ENCODE measurements at regions of chr3 and their contacts with region 1.

Region 1: DNA sequence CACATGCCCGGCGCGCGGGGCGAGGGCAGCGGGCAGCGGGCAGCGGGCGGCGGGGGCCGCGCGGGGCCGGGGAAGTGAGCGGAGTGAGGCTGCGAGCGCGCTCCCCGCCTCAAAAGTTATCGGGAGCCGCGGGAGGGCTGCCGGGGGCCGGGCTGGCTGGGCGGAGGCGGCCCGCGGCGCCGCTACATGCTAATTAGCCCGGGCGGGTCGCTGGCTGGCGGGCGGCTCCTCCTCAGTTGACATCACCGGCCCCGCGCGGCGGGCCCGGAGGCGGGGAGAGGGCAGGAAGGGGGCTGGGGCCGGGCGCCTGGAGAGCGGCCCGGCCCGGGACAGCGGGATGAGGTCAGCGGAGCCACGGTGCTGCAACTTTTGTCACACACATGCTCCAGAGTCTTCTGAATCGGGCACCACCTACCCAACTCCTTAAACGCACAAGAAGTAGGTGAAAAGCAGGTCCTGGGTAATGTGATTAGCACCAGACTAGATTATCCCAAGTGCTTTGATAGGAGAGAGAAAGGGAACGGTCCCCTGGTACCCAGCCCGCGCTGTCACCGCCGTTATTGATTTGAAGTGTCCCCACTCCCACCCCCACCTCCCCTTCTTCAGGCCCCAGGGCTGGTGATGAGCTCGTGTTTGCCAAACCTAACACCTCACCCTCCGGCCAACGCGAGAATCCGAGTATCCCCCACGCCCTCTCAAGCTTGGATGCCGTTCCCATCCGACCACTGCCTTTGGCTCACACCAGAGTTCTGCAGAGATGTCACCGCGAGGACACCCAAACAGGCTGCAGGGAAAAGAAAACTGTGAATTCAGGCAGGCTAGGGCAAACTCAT is at the start of gene HEG1:
- DNase-seq: peak; percentile 75
- H3K4me3 Mint-ChIP-seq: peak within 1 kb of the TSS; percentile 95
- H3K27ac Mint-ChIP-seq: peak within 1 kb of the TSS; percentile 89
- H3K4me1 Mint-ChIP-seq: peaks cover 47% of the 10 kb centered on the region
- H3K27me3 Mint-ChIP-seq: peaks cover 27% of the 10 kb centered on the region
- total RNA-seq, gene HEG1: 58.0 and 59.1 TPM in 2 replicates

Region 2: DNA sequence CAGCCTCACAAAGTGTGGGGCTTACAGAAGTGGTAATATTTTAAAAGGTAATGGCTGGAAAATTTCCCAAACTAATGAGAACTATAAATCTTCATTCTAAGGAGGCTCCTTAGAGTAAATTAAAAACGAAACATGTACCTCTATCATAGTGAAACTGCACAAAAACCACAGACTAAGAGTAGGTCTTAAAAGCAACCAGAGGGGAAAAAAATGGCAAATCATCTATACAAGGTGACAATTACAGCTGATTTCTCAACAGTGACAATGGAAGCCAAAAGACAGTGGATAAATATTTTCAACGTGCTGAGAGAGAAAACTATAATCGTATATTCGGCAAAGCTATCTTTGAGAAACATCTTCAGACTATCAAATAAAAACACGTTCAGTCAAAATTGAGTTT is 20.9 kb before region 1 on chr3:
- intact Hi-C with region 1: loop called (anchors 1 kb)
- DNase-seq: no peak
- H3K4me3 Mint-ChIP-seq: no peak overlapping the region
- H3K27ac Mint-ChIP-seq: no peak overlapping the region
- H3K4me1 Mint-ChIP-seq: peaks cover 27% of the 10 kb centered on the region
- H3K27me3 Mint-ChIP-seq: peaks cover 4% of the 10 kb centered on the region

Region 3: GRCh38 chr3:125087768-125088391 is 31.8 kb after region 1 on chr3:
- intact Hi-C with region 1: no loop called
- DNase-seq: no peak
- H3K4me3 Mint-ChIP-seq: no peak overlapping the region
- H3K27ac Mint-ChIP-seq: no peak overlapping the region
- H3K4me1 Mint-ChIP-seq: peaks cover 3% of the 10 kb centered on the region
- H3K27me3 Mint-ChIP-seq: peaks cover 47% of the 10 kb centered on the region

Region 4: GRCh38 chr3:125125821-125126245 is 69.7 kb after region 1 on chr3:
- intact Hi-C with region 1: loop called (anchors 1 kb)
- DNase-seq: peak; percentile 42
- H3K4me3 Mint-ChIP-seq: no peak overlapping the region
- H3K27ac Mint-ChIP-seq: peak overlapping the region; percentile 64
- H3K4me1 Mint-ChIP-seq: peaks cover 60% of the 10 kb centered on the region
- H3K27me3 Mint-ChIP-seq: peaks cover 16% of the 10 kb centered on the region

Region 5: DNA sequence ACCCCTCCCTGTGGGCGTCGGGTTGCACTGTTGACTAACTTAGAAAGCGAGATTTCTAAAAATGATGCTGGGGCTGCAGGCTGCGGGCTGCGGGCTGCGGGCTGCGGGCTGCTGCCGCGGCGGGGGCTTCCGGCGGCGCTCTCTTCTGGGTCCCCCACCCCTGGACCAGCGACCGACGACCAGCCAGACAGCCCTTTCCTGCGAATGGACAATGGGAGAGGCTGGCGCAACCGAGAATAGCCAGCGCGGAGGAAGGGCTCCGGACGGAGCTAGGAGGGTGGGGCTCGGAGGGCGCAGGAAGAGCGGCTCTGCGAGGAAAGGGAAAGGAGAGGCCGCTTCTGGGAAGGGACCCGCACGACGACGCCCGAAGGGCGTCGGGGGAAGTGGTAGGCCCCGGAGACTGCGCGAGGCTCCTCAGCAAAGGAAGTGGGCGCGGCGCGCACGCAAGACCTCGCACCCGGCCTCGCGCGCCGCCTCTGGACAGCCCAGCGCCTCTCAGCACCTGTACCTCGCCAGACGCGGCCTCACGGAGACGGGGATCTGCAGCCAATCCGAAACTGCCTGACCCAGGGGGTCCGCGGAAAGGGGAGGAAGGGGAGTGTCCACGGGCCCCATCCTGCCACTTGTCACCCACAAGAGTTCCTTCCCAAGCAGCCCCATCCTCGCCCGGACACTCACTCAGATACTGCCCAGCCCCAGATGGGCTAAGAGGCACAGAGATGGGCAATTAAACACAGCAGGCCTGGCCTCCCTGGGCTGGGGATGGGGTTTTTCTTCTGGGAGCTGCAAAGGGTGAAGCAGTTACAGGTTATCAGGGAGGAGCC is 85.7 kb after region 1 on chr3:
- intact Hi-C with region 1: loop called (anchors 1 kb)
- DNase-seq: peak; percentile 72
- H3K4me3 Mint-ChIP-seq: peak overlapping the region; percentile 74
- H3K27ac Mint-ChIP-seq: peak overlapping the region; percentile 89
- H3K4me1 Mint-ChIP-seq: peaks cover 51% of the 10 kb centered on the region
- H3K27me3 Mint-ChIP-seq: peaks cover 55% of the 10 kb centered on the region

Region 6: GRCh38 chr3:125231895-125232294 is 175.8 kb after region 1 on chr3:
- intact Hi-C with region 1: loop called (anchors 1 kb)
- DNase-seq: no peak
- H3K4me3 Mint-ChIP-seq: no peak overlapping the region
- H3K27ac Mint-ChIP-seq: peak overlapping the region; percentile 60
- H3K4me1 Mint-ChIP-seq: peaks cover 18% of the 10 kb centered on the region
- H3K27me3 Mint-ChIP-seq: no peaks in the 10 kb centered on the region